Naive thymus-derived CD4-positive, alpha-beta T cell (primary cell): ENCODE measurements at regions of chr19 and their contacts with region 1.

Region 1: DNA sequence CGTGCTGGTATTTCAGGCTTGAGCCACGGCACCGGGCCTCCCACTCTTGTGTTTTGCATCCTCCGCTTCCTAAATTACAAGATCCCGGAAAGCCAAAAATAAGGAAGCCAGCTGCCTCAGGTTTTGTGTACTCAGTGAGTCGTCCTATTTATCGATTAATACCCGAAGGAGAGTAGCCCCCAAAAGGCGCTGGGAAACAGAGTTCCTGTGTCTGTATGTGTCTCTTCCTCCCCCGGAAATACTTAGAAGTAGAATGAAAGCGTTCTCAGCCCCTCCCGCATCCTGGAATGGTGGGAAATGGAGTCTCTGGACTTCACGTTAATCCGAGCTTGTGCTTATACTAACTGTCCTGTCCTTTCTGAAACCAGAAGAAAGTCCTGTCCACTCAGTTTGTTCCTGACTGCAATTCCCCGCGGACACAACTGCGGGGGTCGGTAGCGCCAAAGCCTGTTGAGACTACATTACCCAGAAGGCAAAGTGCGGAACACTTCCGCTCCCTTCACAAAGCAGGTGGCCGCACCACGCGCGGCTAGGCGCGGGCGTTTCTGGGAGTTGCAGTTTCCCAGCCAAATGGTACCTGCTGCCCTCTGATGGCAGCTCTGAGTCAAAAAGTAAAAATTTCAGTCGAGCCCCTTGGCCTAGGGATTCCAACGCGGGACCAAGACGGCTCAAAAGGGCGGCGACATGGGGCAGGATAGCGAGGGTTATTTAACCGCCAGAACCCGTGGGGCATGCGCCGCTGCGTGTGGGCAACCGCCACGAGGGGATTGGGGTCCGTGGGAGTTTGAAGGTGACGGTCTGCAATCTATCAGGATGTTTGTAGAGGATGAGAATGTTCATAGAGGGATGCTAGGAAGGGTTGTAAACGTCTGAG is 2.2 kb upstream of the GSK3A start:
- DNase-seq: peak; percentile 76 to 93 (median 90)
- ATAC-seq: peak; percentile 51
- H3K4me3 ChIP-seq: peak overlapping the region; percentile 68
- H3K4me3 Mint-ChIP-seq: peak overlapping the region; percentile 91 to 98 (median 96)
- H3K27ac ChIP-seq: peak overlapping the region; percentile 73
- H3K27ac Mint-ChIP-seq: peak overlapping the region; percentile 84 to 99 (median 96)
- H3K4me1 ChIP-seq: peaks cover 28 to 38% of the 10 kb centered on the region in 2 donors
- H3K4me1 Mint-ChIP-seq: peaks cover 36 to 58% (median 54%) of the 10 kb centered on the region in 7 donors
- H3K27me3 ChIP-seq: no peaks in the 10 kb centered on the region
- H3K27me3 Mint-ChIP-seq: no peaks in the 10 kb centered on the region

Region 2: GRCh38 chr19:41883821-41884733 is 360.5 kb before region 1 on chr19:
- CTCF ChIA-PET with region 1: no interaction called
- POLR2A ChIA-PET with region 1: no interaction called
- intact Hi-C with region 1: loop called in 1 of 2 experiments (anchors 10 kb)
- DNase-seq: peak; percentile 69 to 91 (median 79)
- ATAC-seq: peak; percentile 82
- H3K4me3 ChIP-seq: peak overlapping the region; percentile 99
- H3K4me3 Mint-ChIP-seq: peak overlapping the region; percentile 92 to 100 (median 98)
- H3K27ac ChIP-seq: peak overlapping the region; percentile 84
- H3K27ac Mint-ChIP-seq: peak overlapping the region; percentile 93 to 99 (median 98)
- H3K4me1 ChIP-seq: peaks cover 34 to 44% of the 10 kb centered on the region in 2 donors
- H3K4me1 Mint-ChIP-seq: peaks cover 41 to 58% (median 51%) of the 10 kb centered on the region in 7 donors
- H3K27me3 ChIP-seq: no peaks in the 10 kb centered on the region
- H3K27me3 Mint-ChIP-seq: no peaks in the 10 kb centered on the region

Region 3: GRCh38 chr19:42108527-42109389 is 135.8 kb before region 1 on chr19:
- CTCF ChIA-PET with region 1: interaction called, 4 read pairs
- POLR2A ChIA-PET with region 1: no interaction called
- intact Hi-C with region 1: loop called (anchors 1 kb)
- DNase-seq: peak; percentile 73 to 89 (median 83)
- ATAC-seq: peak; percentile 100
- H3K4me3 ChIP-seq: no peak overlapping the region
- H3K4me3 Mint-ChIP-seq: no peak overlapping the region
- H3K27ac ChIP-seq: no peak overlapping the region
- H3K27ac Mint-ChIP-seq: peak overlapping the region in 6 of 9 donors; percentile 28 to 60 (median 34)
- H3K4me1 ChIP-seq: no peaks in the 10 kb centered on the region
- H3K4me1 Mint-ChIP-seq: peaks cover 6 to 44% (median 13%) of the 10 kb centered on the region in 7 donors
- H3K27me3 ChIP-seq: no peaks in the 10 kb centered on the region
- H3K27me3 Mint-ChIP-seq: no peaks in the 10 kb centered on the region

Region 4: GRCh38 chr19:42199440-42200115 is 45.0 kb before region 1 on chr19:
- CTCF ChIA-PET with region 1: interaction called, 3 read pairs
- POLR2A ChIA-PET with region 1: interaction called, 19 read pairs
- intact Hi-C with region 1: loop called (anchors 1 kb)
- DNase-seq: peak in 8 of 9 donors; percentile 40 to 69 (median 48)
- ATAC-seq: peak; percentile 49
- H3K4me3 ChIP-seq: peak overlapping the region; percentile 52
- H3K4me3 Mint-ChIP-seq: peak overlapping the region; percentile 78 to 97 (median 86)
- H3K27ac ChIP-seq: peak overlapping the region; percentile 82
- H3K27ac Mint-ChIP-seq: peak overlapping the region; percentile 84 to 96 (median 92)
- H3K4me1 ChIP-seq: peaks cover 71 to 75% of the 10 kb centered on the region in 2 donors
- H3K4me1 Mint-ChIP-seq: peaks cover 70 to 89% (median 80%) of the 10 kb centered on the region in 7 donors
- H3K27me3 ChIP-seq: no peaks in the 10 kb centered on the region
- H3K27me3 Mint-ChIP-seq: no peaks in the 10 kb centered on the region

Region 5: GRCh38 chr19:42268704-42269477 is 24.3 kb after region 1 on chr19 and contains the start of gene CIC:
- CTCF ChIA-PET with region 1: interaction called, 5 read pairs
- POLR2A ChIA-PET with region 1: interaction called, 23 read pairs
- intact Hi-C with region 1: loop called (anchors 1 kb)
- DNase-seq: peak; percentile 95 to 100 (median 99)
- ATAC-seq: peak; percentile 82
- H3K4me3 ChIP-seq: peak within 1 kb of the TSS; percentile 85
- H3K4me3 Mint-ChIP-seq: peak within 1 kb of the TSS in 1 of 10 donors; percentile 94
- H3K27ac ChIP-seq: peak within 1 kb of the TSS; percentile 96
- H3K27ac Mint-ChIP-seq: peak within 1 kb of the TSS in 4 of 9 donors; percentile 98 to 99 (median 99)
- H3K4me1 ChIP-seq: peaks cover 23 to 29% of the 10 kb centered on the region in 2 donors
- H3K4me1 Mint-ChIP-seq: peaks cover 8 to 31% (median 25%) of the 10 kb centered on the region in 7 donors
- H3K27me3 ChIP-seq: no peaks in the 10 kb centered on the region
- H3K27me3 Mint-ChIP-seq: no peaks in the 10 kb centered on the region
- total RNA-seq, gene CIC: 90.4 to 134 (median 102) TPM

Region 6: GRCh38 chr19:42301656-42302203 is 57.1 kb after region 1 on chr19 and contains the start of gene PRR19:
- CTCF ChIA-PET with region 1: interaction called, 3 read pairs
- POLR2A ChIA-PET with region 1: interaction called, 6 read pairs
- intact Hi-C with region 1: loop called (anchors 1 kb)
- DNase-seq: peak in 1 of 9 donors; percentile 21
- ATAC-seq: peak; percentile 8
- H3K4me3 ChIP-seq: peak within 1 kb of the TSS; percentile 85
- H3K4me3 Mint-ChIP-seq: peak within 1 kb of the TSS; percentile 83 to 92 (median 89)
- H3K27ac ChIP-seq: peak within 1 kb of the TSS; percentile 71
- H3K27ac Mint-ChIP-seq: peak within 1 kb of the TSS; percentile 64 to 94 (median 88)
- H3K4me1 ChIP-seq: peaks cover 11 to 16% of the 10 kb centered on the region in 2 donors
- H3K4me1 Mint-ChIP-seq: peaks cover 11 to 30% (median 23%) of the 10 kb centered on the region in 7 donors
- H3K27me3 ChIP-seq: no peaks in the 10 kb centered on the region
- H3K27me3 Mint-ChIP-seq: no peaks in the 10 kb centered on the region
- total RNA-seq, gene PRR19: 0.32 to 0.68 (median 0.38) TPM in 4 of 5 experiments, not detected in the other

Region 7: DNA sequence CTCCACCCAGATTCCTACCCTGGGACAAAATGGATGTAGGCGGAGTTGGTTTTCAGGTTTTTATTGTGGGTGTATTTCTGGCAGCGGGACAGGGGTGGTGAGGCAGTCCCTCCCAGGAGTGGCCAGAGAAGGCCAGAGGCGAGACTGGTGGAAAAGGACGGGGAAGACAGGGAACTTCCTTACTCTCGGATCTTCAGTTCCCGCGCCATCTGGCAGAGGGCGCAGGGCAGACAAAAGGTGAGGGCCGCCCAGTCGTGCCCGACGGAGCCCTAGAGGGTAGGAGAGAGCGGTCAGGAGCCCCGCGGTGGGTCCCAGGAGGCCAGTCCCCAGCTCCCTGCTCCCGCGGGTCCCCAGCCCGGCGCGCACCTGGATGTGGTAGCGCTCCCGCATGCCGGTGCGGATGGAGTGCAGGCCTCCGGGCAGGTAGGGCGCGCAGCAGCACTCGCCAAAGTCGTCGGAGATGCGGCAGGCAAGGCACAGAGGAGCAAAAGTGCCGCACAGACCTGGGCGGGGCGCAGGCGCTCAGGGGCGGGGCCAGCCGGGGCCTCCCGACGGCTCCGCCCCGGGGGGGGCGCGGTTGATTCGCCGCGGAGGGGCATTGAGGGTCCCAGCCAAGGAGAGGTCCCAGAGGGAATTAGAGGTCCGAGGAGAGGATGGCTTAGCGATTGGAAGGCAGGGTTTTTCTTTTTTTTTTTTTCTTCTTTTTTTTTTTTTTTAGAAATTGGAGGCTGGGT is 142.6 kb after region 1 on chr19:
- CTCF ChIA-PET with region 1: no interaction called
- POLR2A ChIA-PET with region 1: no interaction called
- intact Hi-C with region 1: no loop called
- DNase-seq: peak; percentile 44 to 74 (median 68)
- ATAC-seq: peak; percentile 94
- H3K4me3 ChIP-seq: peak overlapping the region; percentile 48
- H3K4me3 Mint-ChIP-seq: peak overlapping the region; percentile 28 to 77 (median 60)
- H3K27ac ChIP-seq: no peak overlapping the region
- H3K27ac Mint-ChIP-seq: peak overlapping the region in 1 of 9 donors; percentile 31
- H3K4me1 ChIP-seq: no peaks in the 10 kb centered on the region
- H3K4me1 Mint-ChIP-seq: peaks cover 5 to 8% (median 6%) of the 10 kb centered on the region in 7 donors
- H3K27me3 ChIP-seq: no peaks in the 10 kb centered on the region
- H3K27me3 Mint-ChIP-seq: peaks cover 28 to 48% (median 45%) of the 10 kb centered on the region in 5 donors

Region 8: GRCh38 chr19:42480335-42481095 is 235.9 kb after region 1 on chr19:
- CTCF ChIA-PET with region 1: no interaction called
- POLR2A ChIA-PET with region 1: no interaction called
- intact Hi-C with region 1: no loop called
- DNase-seq: peak in 4 of 9 donors; percentile 2 to 13 (median 4)
- ATAC-seq: peak; percentile 53
- H3K4me3 ChIP-seq: no peak overlapping the region
- H3K4me3 Mint-ChIP-seq: peak overlapping the region; percentile 22 to 79 (median 62)
- H3K27ac ChIP-seq: peak overlapping the region; percentile 4
- H3K27ac Mint-ChIP-seq: peak overlapping the region; percentile 18 to 94 (median 77)
- H3K4me1 ChIP-seq: peaks cover 5 to 6% of the 10 kb centered on the region in 2 donors
- H3K4me1 Mint-ChIP-seq: peaks cover 16 to 30% (median 21%) of the 10 kb centered on the region in 7 donors
- H3K27me3 ChIP-seq: no peaks in the 10 kb centered on the region
- H3K27me3 Mint-ChIP-seq: no peaks in the 10 kb centered on the region

Region 9: DNA sequence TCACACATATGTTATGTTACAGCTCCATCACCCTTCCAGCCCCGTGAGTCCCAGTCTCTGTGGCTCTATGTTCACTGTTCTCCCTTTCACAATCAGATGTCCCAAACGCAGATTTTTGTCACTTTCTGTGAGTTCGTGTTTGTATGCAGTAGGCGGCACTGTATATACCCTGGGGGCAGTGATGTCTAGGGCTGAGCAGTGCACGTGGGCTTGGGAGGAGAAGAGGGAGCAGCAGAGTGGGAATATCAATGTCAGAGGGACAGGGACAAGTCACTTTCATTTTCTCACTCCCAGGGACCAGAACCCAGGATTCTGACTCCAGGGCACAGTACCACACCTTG is 612.9 kb after region 1 on chr19:
- CTCF ChIA-PET with region 1: no interaction called
- POLR2A ChIA-PET with region 1: no interaction called
- intact Hi-C with region 1: no loop called
- DNase-seq: no peak
- ATAC-seq: no peak
- H3K4me3 ChIP-seq: no peak overlapping the region
- H3K4me3 Mint-ChIP-seq: no peak overlapping the region
- H3K27ac ChIP-seq: no peak overlapping the region
- H3K27ac Mint-ChIP-seq: no peak overlapping the region
- H3K4me1 ChIP-seq: no peaks in the 10 kb centered on the region
- H3K4me1 Mint-ChIP-seq: no peaks in the 10 kb centered on the region
- H3K27me3 ChIP-seq: no peaks in the 10 kb centered on the region
- H3K27me3 Mint-ChIP-seq: peaks cover 0 to 29% (median 5%) of the 10 kb centered on the region in 5 donors